Breast epithelium (tissue), 4 donors: ENCODE measurements at regions of chr3 and their contacts with region 1.

Region 1: DNA sequence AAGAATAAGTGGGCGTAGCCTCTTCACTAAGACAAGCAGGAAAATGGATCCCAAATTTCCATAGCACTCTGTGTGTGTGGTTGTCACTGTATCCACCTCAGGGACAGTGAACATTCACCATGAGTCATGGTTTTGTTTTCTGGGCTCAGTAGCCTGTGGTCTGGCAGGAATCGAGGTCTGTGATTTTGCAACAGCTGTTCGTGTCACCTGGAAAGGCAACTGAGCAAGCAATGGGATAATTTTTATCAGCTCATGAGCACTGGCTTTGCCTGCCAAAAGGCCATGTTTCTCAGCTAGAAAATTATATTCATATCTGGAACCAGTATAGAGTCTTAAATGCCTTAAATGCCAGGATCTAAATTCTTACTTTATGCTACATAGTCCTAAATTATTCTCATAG is 60.9 kb downstream of the STRIT1 start:
- DNase-seq: peak in 1 of 2 donors; percentile 85
- H3K4me3 ChIP-seq: no peak overlapping the region
- H3K27ac ChIP-seq: peak overlapping the region; percentile 85 to 89
- H3K4me1 ChIP-seq: peaks cover 0 to 5% of the 10 kb centered on the region in 2 donors
- H3K27me3 ChIP-seq: no peaks in the 10 kb centered on the region
- CTCF ChIP-seq: no peak
- POLR2A ChIP-seq: no peak

Region 2: DNA sequence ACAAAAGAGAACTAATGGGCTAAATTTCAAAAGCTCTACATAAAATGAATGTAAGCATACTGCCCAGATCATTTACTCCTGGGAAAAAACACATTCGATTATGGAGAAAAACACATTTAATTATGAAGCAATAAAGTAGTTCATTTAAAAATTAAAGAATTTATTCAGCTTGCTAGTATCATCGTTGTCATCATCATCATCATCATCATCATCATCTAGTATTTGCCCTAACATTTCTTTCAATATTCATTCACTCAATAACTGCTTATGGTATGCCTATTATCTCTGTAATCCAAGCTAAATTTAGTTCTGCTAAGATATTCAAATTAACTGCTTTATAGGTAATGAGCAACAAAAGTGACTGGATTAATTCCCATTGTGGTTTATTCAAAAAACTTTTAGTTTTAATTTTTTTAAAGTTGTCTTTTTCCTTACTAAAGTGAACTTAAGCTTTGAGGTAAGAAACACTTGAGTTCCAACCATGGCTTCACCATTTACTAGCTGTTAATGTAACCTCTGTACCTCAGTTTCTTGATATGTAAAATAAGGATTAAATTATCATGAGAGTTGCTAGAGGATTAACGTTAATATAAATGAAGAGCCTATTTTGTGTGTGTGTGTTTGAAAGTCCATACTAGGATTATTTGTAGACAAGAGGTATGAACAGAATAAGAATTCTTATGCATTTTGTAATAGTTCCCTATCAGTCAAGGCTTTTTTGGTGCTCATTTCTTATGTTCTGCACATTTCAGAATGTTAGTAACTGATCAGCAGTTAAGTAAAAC is 59.0 kb before region 1 on chr3:
- intact Hi-C with region 1: loop called (anchors 2 kb)
- DNase-seq: no peak
- H3K4me3 ChIP-seq: no peak overlapping the region
- H3K27ac ChIP-seq: no peak overlapping the region
- H3K4me1 ChIP-seq: no peaks in the 10 kb centered on the region
- H3K27me3 ChIP-seq: no peaks in the 10 kb centered on the region
- CTCF ChIP-seq: no peak
- POLR2A ChIP-seq: no peak

Region 3: GRCh38 chr3:155217591-155217990 is 15.0 kb before region 1 on chr3:
- intact Hi-C with region 1: no loop called
- DNase-seq: no peak
- H3K4me3 ChIP-seq: no peak overlapping the region
- H3K27ac ChIP-seq: no peak overlapping the region
- H3K4me1 ChIP-seq: no peaks in the 10 kb centered on the region
- H3K27me3 ChIP-seq: no peaks in the 10 kb centered on the region
- CTCF ChIP-seq: no peak
- POLR2A ChIP-seq: no peak